ENCODE measurements at regions of chrX and their contacts with region 1.

Region 1: GRCh38 chrX:104195489-104196084 is 29.3 kb downstream of the FAM199X start:
- DNase-seq: no peak
- H3K4me3 Mint-ChIP-seq: no peak overlapping the region
- H3K27ac Mint-ChIP-seq: no peak overlapping the region
- H3K4me1 Mint-ChIP-seq: peaks cover 3% of the 10 kb centered on the region
- H3K27me3 Mint-ChIP-seq: no peaks in the 10 kb centered on the region

Region 2: DNA sequence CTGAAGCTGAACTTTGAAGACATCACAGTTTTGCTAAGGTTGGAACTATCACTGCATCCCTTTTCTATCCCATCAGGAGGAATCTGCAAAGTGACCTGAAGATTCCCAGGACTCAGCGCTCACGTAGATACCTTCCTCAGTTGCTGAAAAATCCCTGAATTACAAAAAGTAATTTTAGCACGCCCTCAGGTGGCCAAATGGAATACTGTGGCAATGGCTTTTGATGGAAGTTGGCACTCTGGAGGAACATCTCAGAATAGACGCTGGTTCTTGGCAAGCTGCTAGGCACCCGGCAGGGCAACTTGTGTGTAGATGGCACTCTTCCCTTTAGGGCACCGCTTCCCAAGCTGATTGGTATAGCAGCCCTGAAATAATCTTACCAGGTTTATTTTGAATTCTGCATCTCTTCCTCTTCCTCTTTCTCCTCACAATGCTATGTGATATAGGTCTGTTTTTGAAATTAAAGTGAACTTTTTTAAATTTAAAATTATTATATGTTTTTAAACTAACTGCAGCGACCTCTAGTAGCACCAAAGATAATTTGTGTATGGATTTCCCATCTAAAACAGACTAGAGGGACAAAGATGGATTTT is 75.4 kb after region 1 on chrX:
- intact Hi-C with region 1: loop called (anchors 5 kb)
- DNase-seq: no peak
- H3K4me3 Mint-ChIP-seq: no peak overlapping the region
- H3K27ac Mint-ChIP-seq: no peak overlapping the region
- H3K4me1 Mint-ChIP-seq: peaks cover 3% of the 10 kb centered on the region
- H3K27me3 Mint-ChIP-seq: peaks cover 3% of the 10 kb centered on the region

Region 3: DNA sequence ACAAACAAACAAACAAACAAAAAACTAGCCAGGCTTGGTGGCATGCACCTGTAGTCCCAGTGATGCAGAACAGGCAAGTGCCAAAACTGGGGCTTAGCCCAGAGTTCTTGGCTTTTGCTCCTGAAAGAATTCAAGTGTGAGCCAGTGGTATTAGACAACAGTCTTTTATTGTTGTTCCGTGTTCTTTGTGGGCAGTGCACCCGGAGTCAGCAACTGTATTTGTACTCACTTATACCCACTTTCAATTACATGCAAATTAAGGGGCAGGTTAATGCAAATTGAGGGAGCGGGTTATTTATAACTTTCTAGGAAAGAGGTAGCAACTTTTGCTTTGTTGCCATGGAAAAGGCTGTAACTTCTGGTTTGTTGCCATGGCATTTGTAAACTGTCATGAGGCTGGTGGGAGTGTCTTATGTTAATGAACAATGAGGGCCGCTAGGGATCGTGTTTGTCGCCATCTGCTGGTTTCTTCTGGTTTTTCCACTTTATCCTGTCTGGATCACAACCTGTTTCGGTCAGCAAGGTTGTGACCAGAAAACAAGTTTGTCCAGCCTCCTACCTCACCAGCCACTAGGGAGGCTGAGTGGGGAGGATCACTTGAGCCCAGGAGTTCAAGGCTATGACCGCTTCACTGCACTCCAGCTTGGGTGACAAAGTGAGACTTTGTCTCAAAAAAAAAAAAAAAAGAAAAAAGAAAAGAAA is 148.0 kb after region 1 on chrX:
- intact Hi-C with region 1: loop called (anchors 5 kb)
- DNase-seq: peak; percentile 10
- H3K4me3 Mint-ChIP-seq: no peak overlapping the region
- H3K27ac Mint-ChIP-seq: no peak overlapping the region
- H3K4me1 Mint-ChIP-seq: no peaks in the 10 kb centered on the region
- H3K27me3 Mint-ChIP-seq: peaks cover 5% of the 10 kb centered on the region

Region 4: GRCh38 chrX:104877504-104877903 is 681.9 kb after region 1 on chrX:
- intact Hi-C with region 1: no loop called
- DNase-seq: no peak
- H3K4me3 Mint-ChIP-seq: no peak overlapping the region
- H3K27ac Mint-ChIP-seq: no peak overlapping the region
- H3K4me1 Mint-ChIP-seq: no peaks in the 10 kb centered on the region
- H3K27me3 Mint-ChIP-seq: no peaks in the 10 kb centered on the region